Aorta (tissue), 5 donors: ENCODE measurements at regions of chr14 and their contacts with region 1.

Region 1: DNA sequence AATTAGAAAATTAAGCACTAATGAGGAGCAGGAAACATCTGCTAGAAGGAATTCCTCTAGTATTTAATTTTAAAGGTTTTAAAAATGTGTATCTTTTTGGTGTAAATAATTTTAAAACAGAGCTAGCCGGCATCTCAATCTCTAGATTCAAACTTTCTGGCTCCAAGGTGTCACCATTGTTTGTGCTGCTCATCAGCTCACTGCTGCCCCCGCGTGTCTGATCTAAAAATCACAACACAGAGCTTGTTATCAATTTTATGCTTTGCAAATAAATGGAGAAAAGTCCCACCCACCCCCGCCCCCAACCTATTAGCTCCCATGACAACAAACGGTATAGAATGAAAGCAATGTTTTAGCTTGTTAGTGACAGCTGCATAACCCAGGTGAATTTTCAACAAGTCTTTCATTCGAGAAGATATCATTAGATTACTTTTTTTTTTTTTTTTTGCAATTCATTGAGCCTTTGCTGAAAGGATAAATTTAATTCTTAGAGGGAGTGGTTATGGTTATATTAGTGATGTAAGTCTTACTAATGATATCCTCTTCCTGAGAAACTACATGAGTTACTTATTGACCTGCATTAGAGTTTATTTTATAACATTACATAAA is 11.3 kb upstream of the ABHD12B start:
- DNase-seq: peak; percentile 87 to 90
- ATAC-seq: peak; percentile 87
- H3K4me3 ChIP-seq: peak overlapping the region; percentile 46
- H3K27ac ChIP-seq: no peak overlapping the region
- H3K4me1 ChIP-seq: no peaks in the 10 kb centered on the region
- H3K27me3 ChIP-seq: no peaks in the 10 kb centered on the region

Region 2: GRCh38 chr14:50311975-50312733 is 548.4 kb before region 1 on chr14 and contains the starts of genes DMAC2L and L2HGDH:
- intact Hi-C with region 1: no loop called
- DNase-seq: peak; percentile 95 to 98
- ATAC-seq: peak; percentile 100
- H3K4me3 ChIP-seq: peak within 1 kb of the TSS; percentile 54 to 76
- H3K27ac ChIP-seq: peak within 1 kb of the TSS in 1 of 2 donors; percentile 53
- H3K4me1 ChIP-seq: no peaks in the 10 kb centered on the region
- H3K27me3 ChIP-seq: no peaks in the 10 kb centered on the region
- total RNA-seq, gene DMAC2L: 13.1 to 15.8 TPM
- total RNA-seq, gene L2HGDH: 2.1 to 2.7 TPM

Region 3: GRCh38 chr14:50599700-50600444 is 260.7 kb before region 1 on chr14:
- intact Hi-C with region 1: loop called (anchors 5 to 10 kb)
- DNase-seq: no peak
- ATAC-seq: no peak
- H3K4me3 ChIP-seq: no peak overlapping the region
- H3K27ac ChIP-seq: no peak overlapping the region
- H3K4me1 ChIP-seq: no peaks in the 10 kb centered on the region
- H3K27me3 ChIP-seq: no peaks in the 10 kb centered on the region

Region 4: GRCh38 chr14:51066576-51066975 is 206.0 kb after region 1 on chr14:
- intact Hi-C with region 1: no loop called
- DNase-seq: no peak
- ATAC-seq: no peak
- H3K4me3 ChIP-seq: no peak overlapping the region
- H3K27ac ChIP-seq: no peak overlapping the region
- H3K4me1 ChIP-seq: no peaks in the 10 kb centered on the region
- H3K27me3 ChIP-seq: peaks cover 0 to 2% of the 10 kb centered on the region in 2 donors